GM12878 (cell line): ENCODE measurements at regions of chr11 and their contacts with region 1.

Region 1: GRCh38 chr11:43944761-43945311 is 2.4 kb downstream of the C11orf96 start:
- DNase-seq: no peak
- ATAC-seq: peak; percentile 85
- H3K4me3 ChIP-seq: no peak overlapping the region
- H3K27ac ChIP-seq: no peak overlapping the region
- H3K4me1 ChIP-seq: peaks cover 3% of the 10 kb centered on the region; the same call in 1 of the 2 replicates
- H3K27me3 ChIP-seq: peaks cover 19 to 23% of the 10 kb centered on the region in 2 experiments
- CTCF ChIP-seq: peak; percentile 62 to 85 (median 75)
- EP300 ChIP-seq: no peak
- POLR2A ChIP-seq: no peak
- RAD21 ChIP-seq: peak; percentile 51

Region 2: DNA sequence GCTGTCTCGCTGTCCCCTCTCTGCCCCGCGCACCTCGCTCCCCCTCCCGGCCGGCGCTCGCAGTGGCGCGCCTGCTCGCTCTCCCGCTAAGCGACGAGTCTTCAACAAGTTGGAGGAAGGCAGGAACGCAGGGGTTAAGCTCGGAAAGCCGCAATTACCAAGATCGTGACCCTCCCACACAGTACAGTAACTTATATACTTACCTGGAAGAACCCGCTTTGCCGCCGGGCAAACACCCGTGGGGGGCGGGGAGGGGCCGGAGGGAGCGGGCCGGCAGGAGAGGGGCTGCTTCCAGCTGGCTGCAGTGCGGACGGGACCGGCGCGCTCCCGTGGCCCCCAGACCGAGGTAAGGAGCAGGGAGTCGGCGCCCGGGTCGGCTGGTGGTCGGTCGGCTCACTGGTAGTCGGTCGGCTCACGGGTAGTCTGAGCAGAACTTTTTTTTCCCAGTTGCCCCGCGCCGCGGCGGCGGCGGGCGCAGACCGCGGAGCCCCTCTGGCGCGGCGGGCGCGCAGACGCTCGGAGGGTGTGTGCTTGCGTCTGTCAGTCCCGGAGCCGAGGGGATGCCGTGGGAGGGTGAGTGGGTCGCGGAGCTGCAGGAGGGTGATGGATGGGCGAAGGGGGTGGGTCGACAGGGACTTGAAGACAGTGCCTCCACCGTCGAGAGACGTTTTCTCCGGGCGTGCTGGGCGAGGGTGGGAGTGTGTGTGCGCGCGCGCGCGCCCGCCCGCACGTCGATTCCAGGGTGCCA is 365.5 kb before region 1 on chr11:
- CTCF ChIA-PET with region 1: no interaction called
- POLR2A ChIA-PET with region 1: no interaction called
- RAD21 ChIA-PET with region 1: no interaction called
- SMC1A ChIA-PET with region 1: no interaction called
- in situ Hi-C with region 1: no loop called
- intact Hi-C with region 1: loop called (anchors 10 kb)
- DNase-seq: no peak
- ATAC-seq: peak; percentile 73
- H3K4me3 ChIP-seq: peak overlapping the region; percentile 58; the same call in 1 of the 2 replicates
- H3K27ac ChIP-seq: no peak overlapping the region
- H3K4me1 ChIP-seq: no peaks in the 10 kb centered on the region
- H3K27me3 ChIP-seq: peaks cover 33 to 53% of the 10 kb centered on the region in 2 experiments
- CTCF ChIP-seq: peak in 2 of 3 experiments; percentile 21 to 27; a peak in 3 of 6 replicates
- EP300 ChIP-seq: no peak
- POLR2A ChIP-seq: no peak
- RAD21 ChIP-seq: 0 out of 2 replicates have a peak, but pooled peaks have one; percentile 20

Region 3: GRCh38 chr11:44065841-44066731 is 121.2 kb after region 1 on chr11 and contains the start of gene ACCS:
- CTCF ChIA-PET with region 1: no interaction called
- POLR2A ChIA-PET with region 1: no interaction called
- RAD21 ChIA-PET with region 1: no interaction called
- SMC1A ChIA-PET with region 1: no interaction called
- in situ Hi-C with region 1: no loop called
- intact Hi-C with region 1: loop called (anchors 10 kb)
- DNase-seq: peak; percentile 70
- ATAC-seq: peak; percentile 97
- H3K4me3 ChIP-seq: peak within 1 kb of the TSS; percentile 80
- H3K27ac ChIP-seq: peak within 1 kb of the TSS; percentile 82
- H3K4me1 ChIP-seq: peaks cover 11% of the 10 kb centered on the region
- H3K27me3 ChIP-seq: no peaks in the 10 kb centered on the region
- CTCF ChIP-seq: peak; percentile 85 to 86 (median 86)
- EP300 ChIP-seq: no peak
- POLR2A ChIP-seq: peak; percentile 86
- RAD21 ChIP-seq: no peak
- polyA plus RNA-seq, gene ACCS: 4.8 to 5.4 TPM